Activated T-helper 1 cell treated with anti-CD3 and anti-CD28 coated beads, Interleukin-12 subunit alpha, Interleukin-12 subunit beta, Interleukin-2, Interleukin-4 antibody, amounts not matched to agents 30 ng/mL and 10 ng/mL and 1 ng/mL, durations not matched to agents 14 hours and 24 hours and 36 hours (primary cell): ENCODE measurements at regions of chr10 and their contacts with region 1.

Region 1: DNA sequence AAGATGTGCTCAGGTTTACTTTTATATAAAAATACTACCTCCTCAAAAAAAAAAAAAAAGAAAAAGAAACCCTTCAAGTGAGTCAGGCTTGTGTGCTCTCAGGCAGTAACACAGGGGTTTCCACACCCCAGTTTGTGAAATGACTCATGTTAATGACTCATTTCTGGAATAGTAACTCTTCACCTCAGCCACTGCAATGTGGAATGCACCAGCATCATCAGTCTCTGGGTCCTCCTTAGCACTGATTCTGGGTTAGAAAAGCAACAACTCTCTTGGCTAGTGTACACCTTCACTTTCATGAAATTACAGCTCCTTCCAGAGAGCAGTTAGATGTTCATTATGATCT is 110.6 kb downstream of the EMX2 start:
- DNase-seq: peak; percentile 65
- H3K4me3 Mint-ChIP-seq: peak overlapping the region; percentile 11
- H3K27ac Mint-ChIP-seq: peak overlapping the region; percentile 83
- H3K4me1 Mint-ChIP-seq: peaks cover 38% of the 10 kb centered on the region
- H3K27me3 Mint-ChIP-seq: peaks cover 3% of the 10 kb centered on the region

Region 2: GRCh38 chr10:117375360-117376178 is 277.6 kb before region 1 on chr10 and contains the start of gene PDZD8:
- intact Hi-C with region 1: loop called (anchors 5 kb)
- DNase-seq: peak; percentile 87
- H3K4me3 Mint-ChIP-seq: peak within 1 kb of the TSS; percentile 94
- H3K27ac Mint-ChIP-seq: peak within 1 kb of the TSS; percentile 81
- H3K4me1 Mint-ChIP-seq: peaks cover 24% of the 10 kb centered on the region
- H3K27me3 Mint-ChIP-seq: peaks cover 33% of the 10 kb centered on the region
- total RNA-seq, gene PDZD8: 20.2 and 24.5 TPM in 2 replicates

Region 3: DNA sequence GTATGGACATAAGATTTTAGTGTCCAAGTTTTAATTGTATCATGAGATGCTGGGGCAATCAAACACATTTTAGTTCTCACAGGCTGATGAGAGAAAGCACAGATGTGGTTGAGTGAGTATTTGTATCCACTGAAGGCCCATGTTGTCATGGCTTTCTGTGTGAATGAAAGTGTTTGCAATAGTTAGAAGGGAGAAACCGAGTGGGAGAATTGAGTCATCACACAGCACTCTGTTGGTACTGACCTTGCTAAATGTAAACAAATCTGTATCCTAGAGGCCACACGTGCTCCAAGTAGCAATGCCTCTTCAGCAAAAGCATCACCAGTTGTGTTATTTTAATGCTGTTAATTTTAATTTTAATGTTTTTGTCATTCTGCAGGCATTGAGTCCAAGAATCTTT is 10.6 kb after region 1 on chr10:
- intact Hi-C with region 1: loop called (anchors 1 kb)
- DNase-seq: peak; percentile 9
- H3K4me3 Mint-ChIP-seq: no peak overlapping the region
- H3K27ac Mint-ChIP-seq: peak overlapping the region; percentile 78
- H3K4me1 Mint-ChIP-seq: peaks cover 6% of the 10 kb centered on the region
- H3K27me3 Mint-ChIP-seq: peaks cover 13% of the 10 kb centered on the region

Region 4: DNA sequence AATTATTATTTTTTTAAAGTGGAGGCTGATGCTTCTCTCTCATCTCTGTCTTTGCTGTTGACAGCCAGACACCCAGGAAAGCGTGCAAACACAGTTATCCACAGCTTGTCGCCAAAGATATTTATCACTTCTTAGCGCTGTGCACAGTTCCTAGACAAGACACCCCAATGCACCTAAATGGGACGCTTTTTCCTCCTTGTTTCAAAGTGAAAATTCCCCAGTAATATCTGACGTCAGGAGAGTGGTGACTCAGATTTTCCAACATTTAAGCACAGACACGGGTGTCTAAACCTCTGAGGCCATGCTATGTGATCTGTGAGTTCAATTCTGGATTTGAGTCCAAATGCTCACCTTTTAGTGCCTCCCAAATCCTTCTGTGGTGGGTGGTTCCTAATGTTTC is 41.0 kb after region 1 on chr10:
- intact Hi-C with region 1: loop called (anchors 2 kb)
- DNase-seq: no peak
- H3K4me3 Mint-ChIP-seq: no peak overlapping the region
- H3K27ac Mint-ChIP-seq: no peak overlapping the region
- H3K4me1 Mint-ChIP-seq: no peaks in the 10 kb centered on the region
- H3K27me3 Mint-ChIP-seq: peaks cover 14% of the 10 kb centered on the region

Region 5: DNA sequence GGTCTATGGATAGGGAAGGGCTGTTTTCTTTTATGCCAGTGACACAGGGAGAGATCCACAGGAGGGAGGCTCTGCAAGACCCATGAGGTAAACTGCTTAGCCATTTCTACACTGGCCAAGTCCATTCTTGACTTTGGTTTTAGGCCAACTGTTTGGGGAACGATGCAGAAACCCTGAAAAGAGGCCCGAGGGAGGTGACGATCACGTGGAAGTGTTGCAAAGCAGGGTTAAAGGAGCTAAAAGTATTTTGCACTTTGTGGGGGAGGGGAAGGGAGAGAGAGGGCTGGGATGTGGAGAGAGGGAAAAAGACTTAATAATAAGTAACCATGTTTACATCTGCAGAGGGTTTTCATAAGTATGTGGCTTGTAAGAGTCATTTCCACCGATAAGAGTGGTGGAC is 129.1 kb after region 1 on chr10:
- intact Hi-C with region 1: no loop called
- DNase-seq: no peak
- H3K4me3 Mint-ChIP-seq: no peak overlapping the region
- H3K27ac Mint-ChIP-seq: no peak overlapping the region
- H3K4me1 Mint-ChIP-seq: no peaks in the 10 kb centered on the region
- H3K27me3 Mint-ChIP-seq: peaks cover 6% of the 10 kb centered on the region

Region 6: DNA sequence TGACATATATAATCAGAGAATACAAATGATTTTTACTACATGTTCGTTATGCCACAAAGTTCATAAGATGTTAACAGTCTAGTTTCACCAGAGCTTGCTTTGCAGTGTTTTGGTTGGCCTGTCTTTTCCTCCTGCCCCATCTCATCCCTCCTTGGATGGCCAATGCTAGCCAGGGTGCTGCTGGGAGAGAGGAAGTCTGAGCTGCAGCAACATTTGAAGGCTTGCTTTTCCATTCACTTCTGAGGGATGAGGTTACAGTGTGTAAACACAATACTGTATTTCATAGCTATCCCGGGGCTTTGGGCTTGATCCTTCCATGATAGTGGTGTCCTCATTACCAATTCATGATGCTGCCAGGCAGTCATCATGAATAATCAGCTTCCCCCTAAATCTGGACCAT is 223.1 kb after region 1 on chr10:
- intact Hi-C with region 1: no loop called
- DNase-seq: no peak
- H3K4me3 Mint-ChIP-seq: no peak overlapping the region
- H3K27ac Mint-ChIP-seq: no peak overlapping the region
- H3K4me1 Mint-ChIP-seq: no peaks in the 10 kb centered on the region
- H3K27me3 Mint-ChIP-seq: peaks cover 6% of the 10 kb centered on the region

Region 7: GRCh38 chr10:118002581-118002980 is 349.4 kb after region 1 on chr10:
- intact Hi-C with region 1: no loop called
- DNase-seq: no peak
- H3K4me3 Mint-ChIP-seq: no peak overlapping the region
- H3K27ac Mint-ChIP-seq: no peak overlapping the region
- H3K4me1 Mint-ChIP-seq: peaks cover 9% of the 10 kb centered on the region
- H3K27me3 Mint-ChIP-seq: no peaks in the 10 kb centered on the region

Region 8: DNA sequence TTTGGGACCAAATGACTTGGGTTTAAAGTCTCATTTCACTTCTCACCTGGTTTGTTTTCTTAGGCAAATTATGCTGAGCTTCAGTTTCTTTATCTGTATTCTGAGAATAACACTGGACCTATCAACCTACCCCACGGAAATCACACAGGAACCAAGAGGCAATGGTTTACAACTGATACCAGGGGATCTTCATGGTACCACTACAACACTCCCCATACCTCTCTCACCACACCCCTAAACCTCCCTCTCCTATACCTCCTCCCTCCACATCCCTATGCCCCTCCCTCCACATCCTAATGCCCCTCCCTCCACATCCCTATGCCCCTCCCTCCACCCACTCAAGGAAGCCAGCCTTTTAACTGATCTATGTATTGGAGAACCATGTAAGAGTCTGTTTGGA is 679.1 kb after region 1 on chr10:
- intact Hi-C with region 1: loop called (anchors 2 kb)
- DNase-seq: no peak
- H3K4me3 Mint-ChIP-seq: no peak overlapping the region
- H3K27ac Mint-ChIP-seq: peak overlapping the region; percentile 59
- H3K4me1 Mint-ChIP-seq: peaks cover 14% of the 10 kb centered on the region
- H3K27me3 Mint-ChIP-seq: no peaks in the 10 kb centered on the region